Naive thymus-derived CD4-positive, alpha-beta T cell (primary cell): ENCODE measurements at regions of chr5 and their contacts with region 1.

Region 1: DNA sequence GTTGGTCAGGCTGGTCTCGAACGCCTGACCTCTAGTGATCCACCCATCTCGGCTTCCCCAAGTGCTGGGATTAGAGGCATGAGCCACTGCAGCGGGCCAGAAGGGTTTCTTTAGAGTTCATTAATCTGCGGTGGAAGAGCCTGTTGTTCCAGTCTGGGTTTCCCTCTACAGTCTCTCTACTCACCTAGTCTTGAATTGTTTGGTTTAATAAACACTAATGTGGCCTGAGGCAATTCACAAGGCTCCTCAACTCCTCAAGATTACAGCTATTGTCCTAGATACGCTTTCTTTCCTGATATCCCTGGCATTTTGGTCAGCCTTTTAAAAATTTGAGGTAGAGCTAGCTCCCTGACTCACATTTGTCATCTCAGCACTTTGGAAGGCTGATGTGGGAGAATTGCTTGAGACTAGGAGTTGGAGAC is 4.5 kb upstream of the SAR1B start:
- DNase-seq: no peak
- ATAC-seq: no peak
- H3K4me3 ChIP-seq: no peak overlapping the region
- H3K4me3 Mint-ChIP-seq: no peak overlapping the region
- H3K27ac ChIP-seq: no peak overlapping the region
- H3K27ac Mint-ChIP-seq: no peak overlapping the region
- H3K4me1 ChIP-seq: no peaks in the 10 kb centered on the region
- H3K4me1 Mint-ChIP-seq: peaks cover 0 to 10% (median 4%) of the 10 kb centered on the region in 7 donors
- H3K27me3 ChIP-seq: no peaks in the 10 kb centered on the region
- H3K27me3 Mint-ChIP-seq: no peaks in the 10 kb centered on the region

Region 2: GRCh38 chr5:133051580-133052332 is 1585.4 kb before region 1 on chr5 and contains the start of gene HSPA4:
- CTCF ChIA-PET with region 1: no interaction called
- POLR2A ChIA-PET with region 1: no interaction called
- intact Hi-C with region 1: loop called in 1 of 2 experiments (anchors 5 kb)
- DNase-seq: peak; percentile 86 to 99 (median 98)
- ATAC-seq: peak; percentile 91
- H3K4me3 ChIP-seq: peak within 1 kb of the TSS; percentile 92
- H3K4me3 Mint-ChIP-seq: peak within 1 kb of the TSS; percentile 91 to 99 (median 98)
- H3K27ac ChIP-seq: peak within 1 kb of the TSS; percentile 98
- H3K27ac Mint-ChIP-seq: peak within 1 kb of the TSS; percentile 99 to 100 (median 100)
- H3K4me1 ChIP-seq: peaks cover 17 to 19% of the 10 kb centered on the region in 2 donors
- H3K4me1 Mint-ChIP-seq: peaks cover 31 to 70% (median 52%) of the 10 kb centered on the region in 7 donors
- H3K27me3 ChIP-seq: no peaks in the 10 kb centered on the region
- H3K27me3 Mint-ChIP-seq: no peaks in the 10 kb centered on the region
- total RNA-seq, gene HSPA4: 42.1 to 103 (median 50.0) TPM

Region 3: GRCh38 chr5:134609232-134609851 is 27.8 kb before region 1 on chr5:
- CTCF ChIA-PET with region 1: no interaction called
- POLR2A ChIA-PET with region 1: no interaction called
- intact Hi-C with region 1: loop called in 1 of 2 experiments (anchors 2 kb)
- DNase-seq: no peak
- ATAC-seq: no peak
- H3K4me3 ChIP-seq: no peak overlapping the region
- H3K4me3 Mint-ChIP-seq: peak overlapping the region in 1 of 10 donors; percentile 70
- H3K27ac ChIP-seq: no peak overlapping the region
- H3K27ac Mint-ChIP-seq: peak overlapping the region in 8 of 9 donors; percentile 11 to 94 (median 50)
- H3K4me1 ChIP-seq: no peaks in the 10 kb centered on the region
- H3K4me1 Mint-ChIP-seq: peaks cover 0 to 39% (median 8%) of the 10 kb centered on the region in 7 donors
- H3K27me3 ChIP-seq: no peaks in the 10 kb centered on the region
- H3K27me3 Mint-ChIP-seq: no peaks in the 10 kb centered on the region

Region 4: GRCh38 chr5:134758504-134759341 is 121.6 kb after region 1 on chr5 and contains the start of gene DDX46:
- CTCF ChIA-PET with region 1: no interaction called
- POLR2A ChIA-PET with region 1: no interaction called
- intact Hi-C with region 1: loop called (anchors 1 to 5 kb)
- DNase-seq: peak; percentile 85 to 95 (median 91)
- ATAC-seq: peak; percentile 99
- H3K4me3 ChIP-seq: peak within 1 kb of the TSS; percentile 75
- H3K4me3 Mint-ChIP-seq: peak within 1 kb of the TSS; percentile 92 to 100 (median 99)
- H3K27ac ChIP-seq: peak within 1 kb of the TSS; percentile 87
- H3K27ac Mint-ChIP-seq: peak within 1 kb of the TSS; percentile 93 to 99 (median 97)
- H3K4me1 ChIP-seq: peaks cover 12 to 13% of the 10 kb centered on the region in 2 donors
- H3K4me1 Mint-ChIP-seq: peaks cover 20 to 47% (median 38%) of the 10 kb centered on the region in 7 donors
- H3K27me3 ChIP-seq: no peaks in the 10 kb centered on the region
- H3K27me3 Mint-ChIP-seq: no peaks in the 10 kb centered on the region
- total RNA-seq, gene DDX46: 51.2 to 72.5 (median 64.2) TPM